Right ventricle myocardium superior (tissue), 1 donor: ENCODE measurements at regions of chr2 and their contacts with region 1.

Region 1: GRCh38 chr2:101697124-101698013 is at the start of gene MAP4K4:
- DNase-seq: peak; percentile 92
- ATAC-seq: peak; percentile 90
- total RNA-seq, gene MAP4K4: 76.9 TPM

Region 2: GRCh38 chr2:101419096-101419663 is 278.2 kb before region 1 on chr2:
- intact Hi-C with region 1: loop called (anchors 10 kb)
- DNase-seq: no peak
- ATAC-seq: peak; percentile 83

Region 3: DNA sequence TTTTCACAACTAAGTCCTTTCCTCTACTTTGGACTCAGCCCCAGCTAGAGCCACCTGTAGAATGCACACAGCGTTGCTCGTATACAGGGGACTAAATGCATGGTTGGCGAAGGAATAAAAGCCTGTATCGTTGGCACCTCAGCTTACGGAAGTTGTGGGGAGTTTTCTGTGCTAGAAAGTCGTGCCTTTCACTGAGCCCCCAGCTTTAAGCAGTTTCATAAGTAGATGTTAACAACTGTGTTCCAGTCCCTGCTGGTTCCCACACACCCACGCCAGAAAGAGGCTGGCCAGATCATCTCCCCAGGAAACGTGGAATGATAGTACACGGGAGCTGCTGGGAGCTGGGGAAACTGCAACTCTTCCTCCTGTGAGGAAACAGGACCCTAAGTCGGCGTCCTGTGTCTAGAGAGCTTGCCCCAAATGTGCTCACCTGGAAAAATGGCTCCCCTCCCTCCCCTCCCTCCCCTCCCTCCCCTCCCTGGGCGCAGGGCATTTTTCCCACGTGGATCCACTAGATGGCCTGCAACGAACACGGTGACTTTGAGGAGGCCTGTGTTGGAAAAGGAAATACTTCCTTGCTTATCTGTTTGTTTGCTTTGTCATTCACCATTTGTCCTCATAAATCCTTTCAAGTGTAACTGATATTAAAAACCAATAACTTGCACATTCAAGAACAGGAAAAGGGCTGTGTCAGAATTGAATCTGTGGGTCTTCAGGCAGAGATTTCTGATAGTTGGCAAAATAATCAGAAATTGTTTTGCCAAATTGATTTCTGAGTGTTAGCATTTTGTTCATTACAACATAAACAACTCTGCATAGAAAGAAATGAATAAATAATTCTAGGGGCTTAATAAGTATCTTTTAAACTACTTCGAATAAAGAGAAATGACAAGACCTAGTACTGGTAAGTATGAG is 178.5 kb before region 1 on chr2:
- intact Hi-C with region 1: loop called (anchors 10 kb)
- DNase-seq: peak; percentile 53
- ATAC-seq: peak; percentile 91